Right ventricle myocardium superior (tissue), 1 donor: ENCODE measurements at regions of chr17 and their contacts with region 1.

Region 1: DNA sequence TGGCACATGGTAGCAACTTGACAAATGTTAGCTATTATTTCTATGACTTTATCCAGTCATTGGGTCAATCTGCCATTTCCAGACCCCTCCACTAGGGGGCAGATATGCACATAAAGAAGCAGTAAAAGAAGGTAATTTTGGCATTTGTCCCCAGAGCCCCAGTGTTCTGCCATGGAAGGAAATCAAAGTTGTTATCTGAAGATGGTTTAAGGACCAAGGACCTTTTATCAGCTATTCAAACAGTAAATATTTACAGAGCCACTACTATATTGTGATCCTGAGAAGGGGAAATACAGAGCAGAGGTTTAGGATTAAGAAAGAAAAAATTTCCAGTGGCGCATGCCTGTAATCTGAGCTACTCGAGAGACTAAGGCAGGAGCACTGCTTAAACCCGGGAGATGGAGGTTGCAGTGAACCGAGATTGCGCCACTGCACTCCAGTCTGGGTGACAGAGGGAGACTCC is 20.0 kb downstream of the TRAF4 start:
- DNase-seq: no peak
- ATAC-seq: peak; percentile 56

Region 2: DNA sequence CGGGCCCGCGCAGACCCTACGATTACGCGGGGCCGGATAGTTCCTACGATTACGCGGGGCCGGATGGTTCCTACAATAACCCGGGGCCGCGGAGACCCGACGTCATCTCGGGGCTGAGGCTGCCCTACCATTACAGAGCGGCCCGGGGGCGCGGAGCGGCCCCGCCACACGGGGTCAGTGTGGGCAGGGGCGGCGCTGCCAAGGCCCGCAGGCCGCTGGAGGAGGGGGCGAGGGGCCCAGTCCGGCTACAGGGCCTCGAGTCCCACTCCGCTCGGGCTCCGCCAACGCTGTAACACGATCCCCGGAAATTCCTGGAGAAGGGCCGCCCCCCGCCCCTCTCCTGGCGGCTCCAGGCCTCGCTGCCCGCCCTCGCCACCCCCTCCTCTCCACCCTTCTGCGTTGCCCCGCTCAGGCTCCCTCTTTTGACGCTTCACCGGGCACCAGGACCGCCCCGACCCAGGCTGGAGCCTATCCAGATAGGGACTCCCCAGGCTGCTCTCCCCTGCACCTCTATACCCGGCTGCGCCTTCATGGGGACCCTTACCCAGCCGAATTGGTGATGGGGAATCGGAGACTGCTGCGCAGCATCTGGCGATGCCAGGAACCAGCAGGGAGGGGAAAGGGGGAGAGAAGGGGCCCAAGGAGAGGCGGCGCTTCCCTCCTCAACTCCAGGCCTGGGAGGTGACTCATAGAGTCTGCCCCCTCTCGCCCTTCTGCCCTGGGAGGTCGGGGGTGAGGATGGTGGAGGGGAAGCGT is 46.1 kb before region 1 on chr17 and contains the start of gene RAB34:
- intact Hi-C with region 1: no loop called
- DNase-seq: peak; percentile 81
- ATAC-seq: peak; percentile 31
- total RNA-seq, gene RAB34: 14.5 TPM

Region 3: DNA sequence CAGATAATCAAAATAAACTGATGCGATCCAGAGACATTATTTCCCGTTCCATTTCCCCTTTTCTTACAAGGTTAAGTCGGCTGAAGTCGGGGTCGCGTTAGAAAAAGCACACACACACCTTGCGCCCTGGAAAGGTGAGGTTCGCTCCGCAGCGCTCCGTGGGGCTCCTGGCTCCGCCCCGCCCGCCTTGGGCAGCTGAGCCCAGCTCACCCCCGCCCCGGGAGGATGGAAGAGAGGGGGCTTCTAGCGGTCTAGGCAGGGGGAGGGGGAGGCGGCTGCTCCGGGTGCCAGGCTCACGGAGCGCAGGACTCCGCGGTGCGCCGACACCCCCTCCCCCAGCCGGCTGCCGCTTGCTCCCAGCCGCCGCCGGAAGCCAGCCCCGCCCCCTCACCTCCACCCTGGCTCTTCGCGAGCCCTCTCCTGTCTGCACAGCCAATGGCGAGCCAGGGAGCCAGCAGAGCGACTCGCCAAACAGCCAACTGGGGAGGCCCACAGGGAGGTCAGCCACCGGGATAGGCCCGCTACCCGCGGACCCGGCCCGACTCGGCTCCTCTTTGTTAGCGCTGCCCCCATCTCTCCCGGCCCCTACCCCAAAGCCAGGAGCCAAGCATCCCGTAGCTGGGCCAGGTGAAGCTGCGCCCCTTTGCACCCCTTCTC is 48.4 kb after region 1 on chr17:
- intact Hi-C with region 1: loop called (anchors 10 kb)
- DNase-seq: peak; percentile 98
- ATAC-seq: peak; percentile 100

Region 4: GRCh38 chr17:28865946-28866752 is 102.3 kb after region 1 on chr17:
- intact Hi-C with region 1: no loop called
- DNase-seq: no peak
- ATAC-seq: no peak

Region 5: DNA sequence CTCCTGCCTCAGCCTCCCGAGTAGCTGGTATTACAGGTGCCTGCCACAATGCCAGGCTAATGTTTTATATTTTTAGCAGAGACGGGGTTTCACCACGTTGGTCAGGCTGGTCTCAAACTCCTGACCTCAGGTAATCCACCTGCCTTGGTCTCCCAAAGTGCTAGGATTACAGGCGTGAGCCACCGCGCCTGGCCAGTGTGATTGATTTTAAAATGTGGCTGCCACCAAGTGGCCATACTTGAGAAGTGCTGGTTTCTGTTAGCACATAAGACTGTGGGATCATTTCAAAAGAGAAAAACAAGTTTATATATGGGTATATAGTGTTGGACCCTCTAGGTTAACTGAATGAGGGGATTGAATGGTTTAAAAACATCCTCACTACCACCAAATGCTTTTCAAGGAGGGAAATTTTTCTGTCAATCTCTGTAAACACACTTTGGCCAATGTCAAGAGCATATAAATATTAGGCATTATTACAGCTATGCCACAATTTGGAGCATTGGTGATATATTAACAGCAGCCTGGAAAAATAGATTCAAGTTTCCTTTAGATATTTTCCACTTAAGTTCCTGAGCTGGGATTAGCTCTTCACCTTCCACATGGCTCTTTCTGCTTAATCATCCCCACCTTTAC is 152.6 kb after region 1 on chr17:
- intact Hi-C with region 1: loop called (anchors 5 kb)
- DNase-seq: peak; percentile 63
- ATAC-seq: peak; percentile 81